HepG2 (cell line): ENCODE measurements at regions of chr6 and their contacts with region 1.

Region 1: GRCh38 chr6:43769526-43770416 is at the start of gene VEGFA:
- DNase-seq: peak; percentile 83
- ATAC-seq: peak; percentile 61
- H3K4me3 ChIP-seq: peak within 1 kb of the TSS; percentile 90 to 98 (median 95)
- H3K27ac ChIP-seq: peak within 1 kb of the TSS; percentile 86
- H3K4me1 ChIP-seq: peaks cover 64% of the 10 kb centered on the region
- H3K27me3 ChIP-seq: no peaks in the 10 kb centered on the region; a peak in 1 of 5 replicates
- CTCF ChIP-seq: peak; percentile 99
- EP300 ChIP-seq: 0 out of 4 replicates have a peak, but pooled peaks of 1 of the 2 experiments have one; percentile 19
- POLR2A ChIP-seq: peak in 1 of 2 experiments; percentile 91; a peak in 2 of 4 replicates
- RAD21 ChIP-seq: peak; percentile 93
- total RNA-seq, gene VEGFA: 34.1 and 68.1 TPM in 2 replicates

Region 2: GRCh38 chr6:43702534-43703440 is 67.0 kb before region 1 on chr6:
- CTCF ChIA-PET with region 1: no interaction called
- POLR2A ChIA-PET with region 1: interaction called, 11 read pairs
- in situ Hi-C with region 1: no loop called
- intact Hi-C with region 1: no loop called
- DNase-seq: peak; percentile 93
- ATAC-seq: peak; percentile 80
- H3K4me3 ChIP-seq: peak overlapping the region in 2 of 3 experiments; percentile 24 to 54; a peak in 3 of 6 replicates
- H3K27ac ChIP-seq: no peak overlapping the region
- H3K4me1 ChIP-seq: peaks cover 96% of the 10 kb centered on the region
- H3K27me3 ChIP-seq: peaks cover 0 to 19% of the 10 kb centered on the region in 2 experiments; a peak in 3 of 5 replicates
- CTCF ChIP-seq: no peak
- EP300 ChIP-seq: peak in 1 of 2 experiments; percentile 54; a peak in 1 of 4 replicates
- POLR2A ChIP-seq: no peak; a peak in 1 of 4 replicates
- RAD21 ChIP-seq: no peak

Region 3: DNA sequence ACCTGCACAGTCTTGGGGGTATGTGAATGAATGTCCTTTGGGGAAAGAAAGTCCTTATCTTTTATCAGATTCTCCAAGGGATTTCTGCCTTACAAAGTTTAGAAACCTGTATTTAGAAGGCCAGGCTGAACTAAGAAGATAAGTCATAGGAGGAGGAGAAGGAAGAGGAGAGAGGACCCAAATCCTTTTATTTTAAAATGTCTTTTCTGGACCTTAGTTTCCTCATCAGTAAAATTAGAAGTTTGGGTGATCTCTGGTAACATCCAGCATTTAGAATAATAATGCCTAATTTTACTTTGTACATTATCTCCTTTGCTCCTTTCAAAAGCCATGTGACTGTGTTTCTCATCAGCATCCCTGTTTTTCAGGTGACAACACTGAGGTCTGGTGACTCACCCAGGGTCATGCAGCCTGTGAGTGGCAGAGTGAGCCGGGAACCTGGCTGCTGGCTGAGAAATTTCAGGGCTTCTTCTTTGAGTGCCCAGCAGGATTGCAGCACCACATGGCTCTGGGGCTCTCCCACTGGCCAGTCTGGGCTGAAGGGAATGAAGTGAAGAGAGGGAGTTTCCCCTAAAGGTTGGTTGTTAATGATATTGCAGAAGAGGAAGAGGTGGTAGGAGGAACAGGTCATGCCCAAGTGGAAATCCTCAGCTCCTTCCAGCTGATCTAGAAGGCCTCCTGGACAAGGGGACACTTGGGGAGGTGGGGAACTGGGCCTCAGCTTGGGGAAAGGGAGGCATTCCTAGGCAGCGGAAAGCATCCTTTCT is 34.2 kb after region 1 on chr6:
- CTCF ChIA-PET with region 1: interaction called, 3 read pairs
- POLR2A ChIA-PET with region 1: interaction called, 66 read pairs
- in situ Hi-C with region 1: loop called (anchors 5 kb)
- intact Hi-C with region 1: no loop called
- DNase-seq: peak; percentile 56
- ATAC-seq: no peak
- H3K4me3 ChIP-seq: peak overlapping the region in 2 of 3 experiments; percentile 3 to 78; a peak in 3 of 6 replicates
- H3K27ac ChIP-seq: peak overlapping the region; percentile 79
- H3K4me1 ChIP-seq: peaks cover 95% of the 10 kb centered on the region
- H3K27me3 ChIP-seq: no peaks in the 10 kb centered on the region; a peak in 1 of 5 replicates
- CTCF ChIP-seq: no peak
- EP300 ChIP-seq: no peak
- POLR2A ChIP-seq: no peak
- RAD21 ChIP-seq: no peak

Region 4: DNA sequence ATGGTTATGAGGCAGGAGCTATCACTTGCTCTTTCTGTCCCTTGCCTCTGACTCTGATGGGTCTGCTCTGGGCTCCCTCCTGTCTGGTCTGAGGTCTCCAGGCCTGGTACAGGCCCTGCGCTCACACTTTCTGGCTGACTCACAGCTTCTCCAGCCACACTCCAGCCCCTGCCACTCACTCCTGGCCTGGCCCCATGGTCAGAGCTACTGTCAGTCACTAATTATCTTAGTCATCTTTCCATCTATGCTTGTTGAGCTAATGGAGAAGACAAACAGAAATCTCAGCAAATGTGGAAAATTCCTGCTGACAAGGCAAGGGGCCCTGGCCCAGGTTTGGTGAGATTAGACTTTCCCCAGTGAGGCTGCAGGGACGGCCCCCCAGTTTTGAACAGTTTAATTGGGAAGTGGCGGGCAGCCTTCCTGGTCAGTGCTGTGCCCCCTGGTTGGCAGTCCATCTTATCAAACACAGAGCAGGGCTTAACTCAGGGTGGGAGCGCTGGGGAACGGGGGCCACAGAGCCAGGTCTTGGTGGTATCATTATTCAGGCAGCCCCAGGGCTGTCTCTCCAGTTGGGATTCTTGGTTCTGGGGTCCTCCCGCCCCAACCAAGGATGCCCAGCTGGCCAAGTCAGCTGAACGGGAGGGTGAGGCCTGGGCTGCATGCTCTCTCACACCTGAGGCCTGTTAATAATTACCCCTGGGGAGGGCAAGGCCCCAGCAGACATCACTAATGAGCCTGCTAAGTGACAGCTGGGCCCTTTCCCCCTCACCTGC is 63.6 kb after region 1 on chr6:
- CTCF ChIA-PET with region 1: interaction called, 4 read pairs
- POLR2A ChIA-PET with region 1: interaction called, 14 read pairs
- in situ Hi-C with region 1: no loop called
- intact Hi-C with region 1: loop called (anchors 1 kb)
- DNase-seq: peak; percentile 60
- ATAC-seq: peak; percentile 88
- H3K4me3 ChIP-seq: no peak overlapping the region
- H3K27ac ChIP-seq: no peak overlapping the region
- H3K4me1 ChIP-seq: peaks cover 63% of the 10 kb centered on the region
- H3K27me3 ChIP-seq: peaks cover 9 to 72% of the 10 kb centered on the region in 2 experiments
- CTCF ChIP-seq: no peak
- EP300 ChIP-seq: no peak; a peak in 1 of 4 replicates
- POLR2A ChIP-seq: no peak
- RAD21 ChIP-seq: no peak

Region 5: DNA sequence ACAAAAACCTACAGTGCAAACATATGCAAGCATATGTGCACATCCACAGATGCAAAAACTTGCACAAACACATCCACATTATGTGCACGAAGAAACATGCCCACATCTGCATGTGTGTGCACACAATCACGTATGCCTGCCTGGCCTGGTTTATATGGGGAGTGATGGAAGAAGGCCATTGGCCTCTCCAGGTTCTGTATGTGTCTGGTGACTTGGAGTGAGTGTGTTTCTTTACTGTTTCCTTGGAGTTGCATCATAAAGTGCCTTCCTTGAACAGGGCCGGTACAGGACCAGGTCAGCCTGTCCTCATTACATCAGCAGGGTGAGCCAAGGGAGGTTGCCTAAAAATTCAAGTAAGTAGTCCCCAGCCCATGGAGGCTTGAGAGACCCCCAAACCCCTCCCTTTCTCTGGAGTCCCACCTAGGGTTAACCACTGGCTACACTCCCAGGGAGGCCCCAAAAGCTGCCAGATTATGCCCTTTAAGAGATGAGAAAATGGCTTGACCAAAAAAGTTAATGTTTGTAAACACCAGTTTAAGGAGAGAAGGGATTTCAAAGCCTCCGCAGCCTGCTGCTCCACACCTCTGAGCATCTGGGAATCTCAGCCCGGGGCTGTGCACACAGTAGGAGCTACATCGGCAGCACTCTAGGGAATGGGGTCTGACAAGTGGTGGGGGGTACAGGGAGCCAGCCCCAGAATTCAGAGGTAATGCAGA is 141.0 kb after region 1 on chr6:
- CTCF ChIA-PET with region 1: no interaction called
- POLR2A ChIA-PET with region 1: interaction called, 14 read pairs
- in situ Hi-C with region 1: no loop called
- intact Hi-C with region 1: no loop called
- DNase-seq: no peak
- ATAC-seq: no peak
- H3K4me3 ChIP-seq: peak overlapping the region in 2 of 3 experiments; percentile 1 to 51; a peak in 1 of 6 replicates
- H3K27ac ChIP-seq: no peak overlapping the region
- H3K4me1 ChIP-seq: peaks cover 77% of the 10 kb centered on the region
- H3K27me3 ChIP-seq: no peaks in the 10 kb centered on the region
- CTCF ChIP-seq: no peak
- EP300 ChIP-seq: no peak; a peak in 1 of 4 replicates
- POLR2A ChIP-seq: no peak
- RAD21 ChIP-seq: no peak

Region 6: GRCh38 chr6:44074439-44075136 is 304.8 kb after region 1 on chr6:
- CTCF ChIA-PET with region 1: interaction called, 21 read pairs
- POLR2A ChIA-PET with region 1: interaction called, 15 read pairs
- in situ Hi-C with region 1: loop called (anchors 5 kb)
- intact Hi-C with region 1: loop called (anchors 1 kb)
- DNase-seq: peak; percentile 78
- ATAC-seq: peak; percentile 64
- H3K4me3 ChIP-seq: peak overlapping the region; percentile 23 to 74 (median 46)
- H3K27ac ChIP-seq: peak overlapping the region; percentile 57
- H3K4me1 ChIP-seq: peaks cover 85% of the 10 kb centered on the region
- H3K27me3 ChIP-seq: no peaks in the 10 kb centered on the region
- CTCF ChIP-seq: peak; percentile 99
- EP300 ChIP-seq: no peak
- POLR2A ChIP-seq: no peak
- RAD21 ChIP-seq: peak; percentile 85